ENCODE measurements at regions of chr3 and their contacts with region 1.

Region 1: DNA sequence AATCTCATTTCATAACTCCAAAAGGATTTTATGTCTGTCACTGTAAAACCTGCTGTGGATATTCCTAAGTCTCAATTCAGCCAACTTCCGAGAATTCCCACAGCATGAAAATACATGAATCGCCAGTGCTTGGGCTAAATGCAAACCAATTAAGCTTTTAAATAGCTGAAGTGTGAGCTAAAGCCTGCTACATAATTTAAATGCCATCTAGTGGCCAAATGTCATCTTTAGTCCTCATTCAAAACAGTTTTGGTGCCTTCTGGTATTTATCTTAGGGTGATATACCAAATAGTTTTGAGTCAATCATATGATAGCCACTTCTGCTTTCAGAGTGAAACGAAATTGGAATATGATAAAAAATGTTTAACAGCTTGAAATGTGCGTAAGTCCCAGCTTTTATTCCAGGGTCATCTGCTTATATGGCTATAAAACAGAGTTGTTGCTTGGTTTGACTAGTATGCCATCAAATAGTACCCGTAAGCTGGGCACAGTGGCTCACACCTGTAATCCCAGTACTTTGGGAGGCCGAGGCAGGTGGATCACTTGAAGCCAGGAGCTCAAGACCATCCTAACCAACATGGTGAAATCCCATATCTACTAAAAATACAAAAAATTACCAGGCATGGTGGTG is 41.8 kb upstream of the CCNL1 start:
- DNase-seq: peak in 2 of 42 donors; percentile 4 to 33

Region 2: GRCh38 chr3:156976933-156977332 is 224.8 kb before region 1 on chr3:
- intact Hi-C with region 1: no loop called
- DNase-seq: peak in 8 of 42 donors; percentile 2 to 38 (median 8)

Region 3: GRCh38 chr3:157354722-157355121 is 153.0 kb after region 1 on chr3:
- intact Hi-C with region 1: loop called (anchors 10 kb)
- DNase-seq: peak in 3 of 42 donors; percentile 14 to 40 (median 27)

Region 4: GRCh38 chr3:157493627-157494550 is 292.1 kb after region 1 on chr3:
- intact Hi-C with region 1: loop called (anchors 5 kb)
- DNase-seq: peak in 1 of 42 donors; percentile 44